ENCODE measurements at regions of chr3 and their contacts with region 1.

Region 1: DNA sequence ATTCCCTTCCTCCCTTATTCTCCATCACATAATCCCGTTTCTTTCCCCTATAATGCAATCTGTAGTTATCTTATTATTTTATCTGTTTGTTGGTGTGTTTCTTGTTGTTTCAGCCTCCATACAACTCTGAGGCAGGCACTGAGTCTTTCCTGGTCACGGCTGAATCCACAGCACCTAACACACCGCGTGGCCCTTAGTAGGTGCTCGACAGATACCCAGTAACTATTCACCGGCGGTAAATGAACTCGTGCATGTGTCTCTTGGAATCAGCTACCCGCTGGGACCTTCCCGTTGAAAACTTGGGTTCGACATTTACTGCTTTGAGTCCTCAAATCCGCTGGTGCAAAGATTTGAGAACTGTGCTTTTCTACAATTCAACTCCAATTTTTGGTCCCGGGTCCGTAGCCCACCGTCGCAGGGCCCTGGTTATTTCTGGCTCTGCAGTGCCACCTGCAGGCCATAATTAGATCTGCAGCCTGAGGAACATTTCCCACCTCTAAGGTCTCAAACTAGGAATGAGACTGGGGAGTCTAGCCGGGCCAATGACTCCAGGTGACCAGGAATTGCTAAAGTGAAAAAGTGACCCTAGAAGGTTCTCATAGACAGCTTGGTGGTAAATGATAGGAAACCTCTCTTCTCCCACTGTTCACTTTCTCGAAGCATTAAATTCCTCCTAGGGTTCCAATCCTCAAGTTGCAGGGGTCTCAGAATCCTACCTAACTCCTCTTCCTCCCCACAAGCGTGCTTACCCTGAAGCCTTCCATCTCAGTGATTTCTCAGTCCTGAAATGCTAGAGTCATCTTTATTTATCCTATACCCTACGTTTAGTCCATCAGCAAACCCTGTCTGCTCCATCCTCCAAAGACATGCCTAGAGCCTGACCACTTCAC is 40.0 kb upstream of the TRH start:
- DNase-seq: no peak
- ATAC-seq: peak; percentile 63
- H3K4me3 ChIP-seq: no peak overlapping the region
- H3K27ac ChIP-seq: no peak overlapping the region
- H3K4me1 ChIP-seq: no peaks in the 10 kb centered on the region
- H3K27me3 ChIP-seq: no peaks in the 10 kb centered on the region
- CTCF ChIP-seq: peak; percentile 82 to 86 (median 85)
- EP300 ChIP-seq: no peak
- POLR2A ChIP-seq: no peak
- RAD21 ChIP-seq: peak; percentile 92

Region 2: DNA sequence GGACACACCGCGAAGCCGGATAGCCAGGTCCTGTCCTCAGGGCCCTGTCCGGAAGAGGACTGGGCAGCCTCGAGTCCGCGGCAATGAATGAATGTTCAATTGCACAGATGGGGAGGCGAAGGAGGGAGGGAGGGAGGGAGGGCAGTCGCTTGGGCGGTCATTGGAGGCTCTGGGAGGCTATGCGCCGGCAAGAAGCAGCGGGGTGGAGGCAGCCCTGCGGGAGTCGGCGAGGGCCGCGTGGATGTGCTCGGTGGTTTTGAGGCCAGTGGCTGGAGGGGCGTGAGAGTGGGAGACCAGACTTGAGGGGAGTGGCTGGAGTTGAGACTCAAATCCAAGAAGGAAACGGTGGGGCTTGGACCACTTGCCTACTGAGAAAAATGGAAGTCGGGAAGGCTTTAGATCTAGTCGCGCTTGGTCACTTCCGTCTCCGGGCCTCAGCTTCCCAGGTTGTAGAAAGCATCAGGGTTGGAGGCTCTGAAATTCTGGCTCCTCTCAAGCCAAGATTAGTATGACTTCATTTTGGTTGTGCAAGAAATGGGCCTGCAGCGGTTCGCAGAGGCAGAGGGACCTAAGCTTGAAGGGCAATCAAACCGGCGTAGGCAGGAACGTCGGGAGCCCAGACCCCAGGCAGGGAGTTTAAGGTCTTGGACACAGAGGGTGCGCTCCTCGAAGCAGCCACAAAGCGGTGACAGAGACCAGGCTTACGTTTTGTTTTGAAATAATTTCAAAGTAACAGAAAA is 306.9 kb before region 1 on chr3:
- CTCF ChIA-PET with region 1: interaction called, 3 read pairs
- POLR2A ChIA-PET with region 1: no interaction called
- RAD21 ChIA-PET with region 1: interaction called, 3 read pairs
- SMC1A ChIA-PET with region 1: interaction called, 5 read pairs
- in situ Hi-C with region 1: loop called (anchors 5 kb)
- intact Hi-C with region 1: loop called (anchors 1 kb)
- DNase-seq: peak; percentile 45
- ATAC-seq: peak; percentile 68
- H3K4me3 ChIP-seq: peak overlapping the region; percentile 84
- H3K27ac ChIP-seq: peak overlapping the region; percentile 65
- H3K4me1 ChIP-seq: no peaks in the 10 kb centered on the region; the same call in 1 of the 2 replicates
- H3K27me3 ChIP-seq: no peaks in the 10 kb centered on the region; a peak in 1 of 4 replicates
- CTCF ChIP-seq: peak; percentile 85 to 92 (median 90)
- EP300 ChIP-seq: no peak
- POLR2A ChIP-seq: no peak
- RAD21 ChIP-seq: peak; percentile 90

Region 3: DNA sequence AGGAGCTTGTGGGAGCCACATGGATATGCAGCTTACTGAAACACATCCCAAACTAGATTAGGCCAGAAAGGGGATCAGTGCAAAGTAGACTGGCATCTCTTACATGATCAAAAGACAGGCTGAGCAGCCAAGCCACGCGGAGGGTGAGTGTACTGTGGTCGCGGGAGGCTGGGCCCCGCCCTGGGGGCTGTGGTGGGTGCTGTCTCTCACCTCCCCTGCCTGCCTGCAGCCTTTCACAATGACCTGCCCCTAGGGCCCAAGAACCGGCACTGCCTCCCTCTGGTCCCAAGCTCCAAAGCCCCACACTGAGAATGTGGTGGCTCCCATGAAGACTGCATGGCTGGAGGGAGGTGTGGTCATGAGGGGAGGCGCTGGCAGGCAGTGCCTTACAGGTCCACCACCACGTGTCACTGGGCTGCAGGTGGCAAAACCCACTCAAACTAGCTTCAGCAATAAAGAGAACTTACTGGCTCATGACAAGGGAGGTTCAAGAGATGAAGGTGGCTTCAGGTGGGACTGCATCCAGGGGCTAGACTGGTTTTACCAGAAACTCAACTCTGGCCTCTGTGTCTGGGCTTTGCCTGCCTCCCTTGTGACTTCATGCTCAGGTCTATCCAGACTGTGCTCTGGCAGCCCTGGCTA is 300.6 kb before region 1 on chr3:
- CTCF ChIA-PET with region 1: no interaction called
- POLR2A ChIA-PET with region 1: no interaction called
- RAD21 ChIA-PET with region 1: no interaction called
- SMC1A ChIA-PET with region 1: interaction called, 5 read pairs
- in situ Hi-C with region 1: loop called (anchors 5 kb)
- intact Hi-C with region 1: no loop called
- DNase-seq: no peak
- ATAC-seq: no peak
- H3K4me3 ChIP-seq: no peak overlapping the region
- H3K27ac ChIP-seq: no peak overlapping the region
- H3K4me1 ChIP-seq: no peaks in the 10 kb centered on the region
- H3K27me3 ChIP-seq: no peaks in the 10 kb centered on the region; a peak in 1 of 4 replicates
- CTCF ChIP-seq: no peak
- EP300 ChIP-seq: no peak
- POLR2A ChIP-seq: no peak
- RAD21 ChIP-seq: no peak

Region 4: DNA sequence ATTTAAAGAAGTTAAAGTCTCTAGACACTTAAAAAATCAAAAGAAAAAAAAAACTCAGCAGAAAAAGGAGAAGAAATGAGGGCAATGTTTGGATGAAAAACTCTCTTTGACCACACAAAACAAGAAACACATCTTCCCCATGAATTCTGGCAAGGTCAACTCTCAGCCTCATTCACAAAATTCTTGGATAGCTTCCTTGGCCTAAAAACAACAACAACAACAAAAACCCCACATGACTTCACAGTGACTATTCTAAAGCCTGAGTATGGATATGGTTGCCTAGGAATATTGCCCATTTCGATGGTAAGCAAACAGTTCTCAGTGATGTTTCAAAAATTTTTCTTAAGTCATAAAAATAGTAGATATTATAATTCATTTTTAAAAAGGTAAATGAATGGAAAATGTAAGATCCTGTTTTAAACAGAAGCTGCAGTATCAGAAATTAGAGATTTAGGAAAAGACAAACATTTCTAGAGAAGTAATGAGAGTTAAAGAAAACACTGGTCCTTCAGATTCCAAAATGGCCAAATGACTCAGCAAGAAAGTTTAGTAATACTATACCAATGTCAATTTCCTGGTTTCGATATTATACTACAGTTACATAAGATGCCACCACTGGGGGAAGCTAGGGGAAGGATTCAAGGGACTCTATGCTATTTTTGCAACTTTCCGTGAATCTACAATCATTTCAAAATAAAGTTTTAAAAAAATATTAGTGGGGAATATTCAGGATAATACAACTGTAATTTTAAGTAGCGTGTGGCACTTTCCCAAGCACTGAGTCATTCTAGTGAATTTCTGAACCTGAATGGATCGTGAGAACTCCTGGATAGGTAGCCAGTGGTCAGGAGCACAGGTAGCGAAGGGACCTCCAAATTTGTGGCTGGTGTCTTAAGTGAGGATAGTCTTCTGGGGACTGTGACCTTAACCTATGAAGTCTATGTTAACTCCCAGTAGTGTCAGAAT is 78.7 kb before region 1 on chr3:
- CTCF ChIA-PET with region 1: no interaction called
- POLR2A ChIA-PET with region 1: no interaction called
- RAD21 ChIA-PET with region 1: no interaction called
- SMC1A ChIA-PET with region 1: no interaction called
- in situ Hi-C with region 1: no loop called
- intact Hi-C with region 1: no loop called
- DNase-seq: no peak
- ATAC-seq: peak; percentile 90
- H3K4me3 ChIP-seq: no peak overlapping the region
- H3K27ac ChIP-seq: peak overlapping the region; percentile 8; the same call in 1 of the 2 replicates
- H3K4me1 ChIP-seq: peaks cover 4% of the 10 kb centered on the region; the same call in 1 of the 2 replicates
- H3K27me3 ChIP-seq: no peaks in the 10 kb centered on the region
- CTCF ChIP-seq: no peak
- EP300 ChIP-seq: no peak
- POLR2A ChIP-seq: no peak
- RAD21 ChIP-seq: no peak